WTC11 (cell line): ENCODE measurements at regions of chr17 and their contacts with region 1.

Region 1: DNA sequence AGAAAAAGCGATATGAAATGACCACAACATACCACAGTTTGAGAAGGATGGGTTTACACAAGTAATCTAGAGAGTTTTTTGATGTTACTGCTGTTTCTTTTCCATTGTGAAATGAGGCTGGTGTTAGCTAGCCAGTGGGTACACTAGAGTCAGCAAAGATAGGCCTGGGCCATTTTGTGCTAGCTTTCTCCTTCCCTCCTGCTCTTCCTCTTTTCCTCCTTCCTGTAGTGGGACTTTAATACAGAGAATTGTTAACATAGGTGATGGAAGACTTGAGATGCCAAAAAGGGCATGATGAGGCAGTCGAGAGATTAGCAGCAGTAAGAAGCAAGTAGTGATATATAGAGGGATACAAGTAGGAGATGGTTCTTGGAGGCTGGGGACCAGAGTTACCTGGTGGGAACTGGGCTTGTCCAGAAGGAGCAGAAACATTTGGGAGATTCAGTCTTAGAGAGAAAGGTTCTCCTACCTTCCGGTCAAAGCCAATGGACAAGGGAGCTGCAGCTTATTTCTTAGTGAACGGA is 7.7 kb downstream of the NSRP1 start:
- DNase-seq: no peak
- ATAC-seq: no peak
- H3K4me3 Mint-ChIP-seq: no peak overlapping the region
- H3K27ac Mint-ChIP-seq: peak overlapping the region; percentile 38
- H3K4me1 Mint-ChIP-seq: 0 out of 2 replicates have a peak, but pooled peaks cover 3% of the 10 kb centered on the region
- H3K27me3 Mint-ChIP-seq: no peaks in the 10 kb centered on the region
- CTCF ChIP-seq: no peak

Region 2: GRCh38 chr17:30031214-30031869 is 93.0 kb before region 1 on chr17:
- CTCF ChIA-PET with region 1: no interaction called
- POLR2A ChIA-PET with region 1: no interaction called
- DNase-seq: no peak
- ATAC-seq: no peak
- H3K4me3 Mint-ChIP-seq: no peak overlapping the region
- H3K27ac Mint-ChIP-seq: no peak overlapping the region
- H3K4me1 Mint-ChIP-seq: no peaks in the 10 kb centered on the region
- H3K27me3 Mint-ChIP-seq: no peaks in the 10 kb centered on the region; the same call in 1 of the 2 replicates
- CTCF ChIP-seq: no peak

Region 3: GRCh38 chr17:30137158-30137557 is 12.8 kb after region 1 on chr17:
- CTCF ChIA-PET with region 1: interaction called, 12 read pairs
- POLR2A ChIA-PET with region 1: no interaction called
- DNase-seq: no peak
- ATAC-seq: no peak
- H3K4me3 Mint-ChIP-seq: no peak overlapping the region
- H3K27ac Mint-ChIP-seq: peak overlapping the region; percentile 34; the same call in 1 of the 2 replicates
- H3K4me1 Mint-ChIP-seq: peaks cover 7% of the 10 kb centered on the region
- H3K27me3 Mint-ChIP-seq: no peaks in the 10 kb centered on the region
- CTCF ChIP-seq: no peak

Region 4: DNA sequence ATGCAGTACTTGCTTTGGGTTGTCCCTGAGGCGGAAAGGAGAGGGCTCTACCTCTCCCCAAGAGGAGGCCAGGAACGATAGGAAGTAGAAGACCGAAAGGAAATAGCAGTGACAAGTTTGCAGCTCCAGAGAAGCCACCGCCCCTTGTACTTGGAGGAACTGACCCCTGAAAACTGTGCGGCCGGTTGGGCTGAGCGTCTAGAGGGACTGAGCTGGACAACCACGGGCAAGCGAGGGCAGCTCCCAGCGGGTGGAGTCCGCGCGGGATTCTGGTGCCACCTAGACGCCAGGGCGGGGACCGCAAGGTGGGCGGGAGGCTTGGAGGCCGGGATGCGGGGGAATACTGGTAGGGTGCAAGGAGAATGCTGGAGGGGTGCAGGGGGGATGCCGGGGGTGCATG is 112.4 kb after region 1 on chr17:
- CTCF ChIA-PET with region 1: interaction called, 42 read pairs
- POLR2A ChIA-PET with region 1: no interaction called
- DNase-seq: peak; percentile 75
- ATAC-seq: peak; percentile 11
- H3K4me3 Mint-ChIP-seq: peak overlapping the region; percentile 54
- H3K27ac Mint-ChIP-seq: no peak overlapping the region
- H3K4me1 Mint-ChIP-seq: peaks cover 28% of the 10 kb centered on the region
- H3K27me3 Mint-ChIP-seq: peaks cover 82% of the 10 kb centered on the region
- CTCF ChIP-seq: no peak

Region 5: DNA sequence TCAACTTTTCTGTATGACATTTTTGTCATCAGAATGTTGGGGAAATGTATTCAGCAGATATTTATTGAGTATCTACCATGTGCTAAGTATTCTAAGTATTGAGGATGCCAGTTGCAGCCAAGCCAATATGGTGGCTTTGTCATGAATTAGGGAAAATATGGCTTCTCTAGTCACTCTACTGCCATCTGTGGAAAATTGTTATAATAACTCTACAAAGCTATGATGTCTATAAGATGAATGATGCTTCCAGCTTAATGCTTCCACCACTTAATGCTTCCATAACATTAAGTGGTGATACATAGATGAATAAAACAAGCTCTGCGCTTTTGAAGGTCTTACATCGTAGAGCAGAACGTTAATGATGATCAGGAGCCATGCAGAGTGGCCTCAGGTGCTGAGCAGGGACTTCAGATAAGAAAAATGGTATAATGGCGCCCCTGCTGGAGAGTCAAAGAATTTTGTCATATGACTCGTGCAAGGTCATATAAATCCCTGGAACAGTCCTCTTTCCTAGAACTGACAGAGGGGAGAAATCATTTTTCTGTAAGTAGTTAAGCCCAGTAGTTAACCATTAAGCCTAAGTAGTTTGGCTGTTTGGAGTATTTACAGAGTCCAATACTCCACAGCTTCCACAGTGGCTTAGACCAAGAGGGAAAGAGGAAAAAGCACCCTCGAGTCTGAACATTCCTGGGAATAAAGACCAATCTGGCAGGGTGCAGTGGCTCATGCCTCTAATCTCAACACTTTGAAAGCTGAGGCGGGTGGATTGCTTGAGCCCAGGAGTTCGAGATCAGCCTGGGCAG is 212.2 kb after region 1 on chr17:
- CTCF ChIA-PET with region 1: interaction called, 12 read pairs
- POLR2A ChIA-PET with region 1: no interaction called
- DNase-seq: peak; percentile 62
- ATAC-seq: peak; percentile 46
- H3K4me3 Mint-ChIP-seq: no peak overlapping the region
- H3K27ac Mint-ChIP-seq: no peak overlapping the region
- H3K4me1 Mint-ChIP-seq: peaks cover 14% of the 10 kb centered on the region
- H3K27me3 Mint-ChIP-seq: peaks cover 35% of the 10 kb centered on the region
- CTCF ChIP-seq: peak; percentile 70